ENCODE measurements at regions of chr5 and their contacts with region 1.

Region 1: DNA sequence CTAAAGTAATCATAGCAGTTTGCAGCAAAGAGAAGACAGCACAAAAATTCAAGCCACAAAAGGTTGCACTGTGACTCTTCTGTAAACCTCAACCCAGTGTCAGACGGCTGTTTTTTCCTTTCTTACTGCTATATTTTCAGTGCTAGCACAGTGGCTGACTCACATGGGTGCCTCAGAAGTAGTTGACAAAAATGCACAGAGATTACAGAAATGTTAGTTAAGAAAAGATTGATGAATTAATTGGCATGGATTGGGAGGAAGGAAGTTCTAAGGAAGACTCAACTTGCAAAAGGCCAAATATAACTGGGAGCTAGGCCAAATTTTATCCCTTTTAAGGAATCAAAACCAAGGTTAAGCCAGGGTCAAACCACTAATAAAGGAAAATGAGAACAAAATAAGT is 43.7 kb upstream of the ITGA1 start:
- DNase-seq: peak; percentile 66
- H3K4me3 Mint-ChIP-seq: peak overlapping the region; percentile 49
- H3K27ac Mint-ChIP-seq: peak overlapping the region; percentile 78
- H3K4me1 Mint-ChIP-seq: peaks cover 80% of the 10 kb centered on the region
- H3K27me3 Mint-ChIP-seq: no peaks in the 10 kb centered on the region

Region 2: DNA sequence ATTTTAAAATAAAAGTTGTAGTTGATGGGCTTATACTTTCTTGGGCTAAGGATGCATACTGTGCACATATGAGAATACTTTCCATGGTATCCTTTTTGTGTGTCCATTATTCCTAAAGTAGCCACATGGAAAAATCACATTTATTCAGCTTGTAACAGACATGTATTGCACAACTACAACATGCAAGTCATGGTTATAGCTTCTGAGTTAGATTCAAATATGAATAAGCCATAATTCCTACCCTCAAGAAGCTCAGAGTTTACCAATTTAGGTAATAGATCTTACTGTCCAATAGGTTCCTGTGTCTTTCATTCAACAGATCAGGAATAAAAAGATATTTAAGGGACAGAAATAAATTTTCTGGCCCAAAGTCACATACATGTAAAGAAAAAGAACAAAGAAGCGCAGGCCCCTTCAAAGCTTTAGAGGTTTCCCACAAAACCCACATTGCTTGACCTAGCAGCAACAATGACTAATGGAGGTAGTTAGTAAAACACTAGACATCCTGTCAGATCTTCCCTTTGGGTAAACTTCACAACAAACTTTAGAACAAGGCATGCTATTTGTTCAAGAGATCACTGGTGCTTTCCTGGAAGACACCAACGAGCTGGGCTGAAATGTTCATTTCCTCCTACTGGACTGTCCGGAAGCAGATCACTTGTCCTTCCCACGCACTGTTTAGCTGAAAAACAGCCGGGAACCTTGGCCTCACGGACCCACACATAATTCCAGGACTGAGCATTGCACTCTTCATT is 34.6 kb before region 1 on chr5:
- intact Hi-C with region 1: loop called (anchors 1 kb)
- DNase-seq: peak; percentile 17
- H3K4me3 Mint-ChIP-seq: peak overlapping the region; percentile 28
- H3K27ac Mint-ChIP-seq: peak overlapping the region; percentile 59
- H3K4me1 Mint-ChIP-seq: peaks cover 74% of the 10 kb centered on the region
- H3K27me3 Mint-ChIP-seq: no peaks in the 10 kb centered on the region

Region 3: GRCh38 chr5:52725065-52725746 is 18.8 kb before region 1 on chr5:
- intact Hi-C with region 1: loop called (anchors 1 kb)
- DNase-seq: peak; percentile 69
- H3K4me3 Mint-ChIP-seq: peak overlapping the region; percentile 78
- H3K27ac Mint-ChIP-seq: peak overlapping the region; percentile 85
- H3K4me1 Mint-ChIP-seq: peaks cover 61% of the 10 kb centered on the region
- H3K27me3 Mint-ChIP-seq: no peaks in the 10 kb centered on the region

Region 4: DNA sequence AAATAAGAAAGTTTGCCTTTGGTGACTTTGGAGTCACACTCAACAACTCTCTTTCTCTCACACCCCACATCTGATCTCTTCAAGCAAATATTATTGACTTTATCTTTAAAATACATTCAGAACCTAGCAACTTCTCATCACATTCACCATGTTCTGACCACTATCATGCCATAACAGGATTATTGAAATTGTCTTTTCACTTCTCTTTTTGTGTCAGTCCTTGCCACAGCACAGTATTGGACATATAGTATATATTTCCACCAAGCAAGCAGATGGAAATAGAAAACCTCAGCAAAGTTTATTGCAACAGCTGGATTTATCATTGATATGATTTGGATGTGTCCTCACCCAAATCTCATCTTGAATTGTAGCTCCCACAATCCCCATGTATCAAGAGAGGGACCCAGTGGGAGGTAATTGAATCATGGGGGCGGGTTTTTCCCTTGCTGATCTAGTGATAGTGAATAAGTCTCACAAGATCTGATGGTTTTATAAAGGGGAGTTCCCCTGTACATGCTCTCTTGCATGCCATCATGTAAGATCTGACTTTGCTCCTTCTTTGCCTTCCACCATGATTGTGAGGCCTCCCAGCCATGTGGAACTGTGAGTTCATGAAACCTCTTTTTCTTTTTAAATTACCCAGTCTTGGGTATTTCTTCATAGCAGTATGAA is 16.9 kb after region 1 on chr5:
- intact Hi-C with region 1: loop called (anchors 1 kb)
- DNase-seq: no peak
- H3K4me3 Mint-ChIP-seq: no peak overlapping the region
- H3K27ac Mint-ChIP-seq: no peak overlapping the region
- H3K4me1 Mint-ChIP-seq: peaks cover 15% of the 10 kb centered on the region
- H3K27me3 Mint-ChIP-seq: no peaks in the 10 kb centered on the region

Region 5: DNA sequence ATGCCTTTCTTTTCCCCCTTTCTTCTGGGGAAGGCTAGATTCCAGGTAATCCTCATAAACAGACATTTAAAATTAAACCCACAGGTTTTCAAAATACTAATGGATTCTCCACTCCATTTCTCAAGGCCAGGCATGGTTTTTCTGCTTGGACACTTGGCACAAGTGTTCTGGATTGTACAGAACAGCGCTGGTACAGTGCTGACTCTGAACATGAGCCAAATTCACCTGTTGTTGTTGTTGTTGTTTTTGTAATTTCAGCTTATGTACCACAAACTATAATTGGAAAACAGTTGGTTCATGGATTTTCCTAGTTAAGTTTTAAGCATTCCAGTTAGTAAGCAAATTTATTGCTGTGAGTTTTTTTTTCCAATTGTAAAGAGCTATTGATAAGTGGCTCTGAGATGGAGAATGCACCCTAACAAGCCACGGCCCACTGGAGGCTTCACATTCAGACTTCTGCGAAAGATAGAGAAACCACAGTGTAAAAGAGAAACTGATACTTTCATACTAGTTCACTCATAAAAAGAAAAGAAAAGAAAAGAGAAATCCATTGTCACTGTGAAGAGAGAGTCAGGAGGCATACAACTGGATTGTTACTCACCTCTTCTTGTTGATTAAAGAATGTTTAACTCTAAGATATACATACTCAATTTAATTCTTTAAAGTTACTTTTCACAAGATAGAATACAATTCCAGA is 27.5 kb after region 1 on chr5:
- intact Hi-C with region 1: loop called (anchors 1 kb)
- DNase-seq: peak; percentile 37
- H3K4me3 Mint-ChIP-seq: peak overlapping the region; percentile 3
- H3K27ac Mint-ChIP-seq: peak overlapping the region; percentile 61
- H3K4me1 Mint-ChIP-seq: peaks cover 81% of the 10 kb centered on the region
- H3K27me3 Mint-ChIP-seq: peaks cover 5% of the 10 kb centered on the region

Region 6: GRCh38 chr5:52787600-52788504 is 43.9 kb after region 1 on chr5 and contains the starts of genes ITGA1 and PELO:
- intact Hi-C with region 1: loop called (anchors 5 kb)
- DNase-seq: peak; percentile 32
- H3K4me3 Mint-ChIP-seq: peak within 1 kb of the TSS; percentile 91
- H3K27ac Mint-ChIP-seq: peak within 1 kb of the TSS; percentile 32
- H3K4me1 Mint-ChIP-seq: peaks cover 33% of the 10 kb centered on the region
- H3K27me3 Mint-ChIP-seq: peaks cover 15% of the 10 kb centered on the region
- total RNA-seq, gene ITGA1: 2.2 and 2.5 TPM in 2 replicates
- total RNA-seq, gene PELO: 19.4 and 20.0 TPM in 2 replicates

Region 7: GRCh38 chr5:53360811-53361210 is 616.8 kb after region 1 on chr5:
- intact Hi-C with region 1: no loop called
- DNase-seq: no peak
- H3K4me3 Mint-ChIP-seq: no peak overlapping the region
- H3K27ac Mint-ChIP-seq: no peak overlapping the region
- H3K4me1 Mint-ChIP-seq: no peaks in the 10 kb centered on the region
- H3K27me3 Mint-ChIP-seq: peaks cover 1% of the 10 kb centered on the region

Measured in activated T-helper 1 cell treated with anti-CD3 and anti-CD28 coated beads, Interleukin-12 subunit alpha, Interleukin-12 subunit beta, Interleukin-2, Interleukin-4 antibody, amounts not matched to agents 30 ng/mL and 10 ng/mL and 1 ng/mL, durations not matched to agents 14 hours and 24 hours and 36 hours (primary cell).